ENCODE measurements at regions of chr1 and their contacts with region 1.

Region 1: DNA sequence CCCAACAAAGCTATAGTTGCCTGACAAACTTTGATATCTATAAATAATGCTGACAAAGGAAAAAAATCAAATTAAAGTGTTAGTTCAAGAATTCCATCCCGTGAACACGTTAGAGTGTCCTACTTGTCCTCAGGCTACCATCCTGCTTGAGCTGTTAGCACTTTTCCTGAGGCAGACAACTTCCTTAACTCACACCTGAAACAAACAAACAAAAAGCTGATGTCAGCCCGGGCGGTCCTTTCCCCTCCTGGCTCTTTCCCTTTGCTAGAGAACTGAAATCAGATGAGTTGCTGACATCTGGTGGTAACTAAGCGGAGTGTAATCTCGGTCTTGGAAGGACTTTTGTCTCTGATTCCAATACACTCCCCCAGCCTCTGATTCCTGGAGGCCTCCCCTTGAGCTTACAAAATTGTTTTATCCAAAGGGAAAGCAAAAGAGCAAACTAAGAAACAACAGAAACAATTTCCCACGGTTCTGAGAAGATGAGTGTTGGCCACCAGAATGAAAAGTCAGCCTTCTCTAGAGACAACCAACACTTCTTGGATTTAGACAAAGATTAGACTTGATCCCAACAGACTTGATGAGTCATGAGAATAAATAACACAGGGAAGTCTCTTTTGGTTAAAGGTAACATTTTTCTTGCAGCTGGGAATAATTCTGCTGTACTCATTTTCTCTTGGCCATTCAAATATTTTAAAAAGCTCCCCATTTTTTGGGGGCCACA is 135.4 kb downstream of the PROX1 start:
- DNase-seq: no peak
- H3K4me3 ChIP-seq: no peak overlapping the region
- H3K27ac ChIP-seq: no peak overlapping the region
- H3K4me1 ChIP-seq: no peaks in the 10 kb centered on the region
- H3K27me3 ChIP-seq: peaks cover 0 to 3% (median 0%) of the 10 kb centered on the region in 4 donors
- CTCF ChIP-seq: peak; percentile 38 to 51 (median 43)
- EP300 ChIP-seq: no peak
- POLR2A ChIP-seq: no peak

Region 2: GRCh38 chr1:213374369-213374768 is 748.9 kb before region 1 on chr1:
- intact Hi-C with region 1: loop called (anchors 5 kb)
- DNase-seq: no peak
- H3K4me3 ChIP-seq: no peak overlapping the region
- H3K27ac ChIP-seq: no peak overlapping the region
- H3K4me1 ChIP-seq: no peaks in the 10 kb centered on the region
- H3K27me3 ChIP-seq: no peaks in the 10 kb centered on the region
- CTCF ChIP-seq: peak; percentile 57 to 82 (median 67)
- EP300 ChIP-seq: no peak
- POLR2A ChIP-seq: no peak

Region 3: DNA sequence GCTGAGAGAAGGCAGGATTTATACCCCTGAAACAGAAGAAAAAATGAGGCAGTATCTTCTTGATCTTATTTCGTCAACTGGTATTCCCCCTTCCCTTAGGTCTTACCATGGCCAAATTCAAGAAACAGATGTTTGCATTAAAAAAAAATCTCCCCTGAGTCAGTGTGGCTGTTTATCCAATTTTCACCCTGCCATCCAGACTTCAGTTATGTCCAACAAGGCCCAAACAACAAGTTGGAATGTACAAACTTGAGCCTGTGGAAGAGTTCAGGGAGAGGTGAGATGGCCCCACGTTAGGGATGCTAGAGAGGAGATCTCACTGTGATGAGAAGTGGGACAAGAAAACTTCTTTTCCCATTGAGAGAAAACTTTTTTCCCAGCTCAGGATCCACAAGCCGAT is 282.6 kb before region 1 on chr1:
- intact Hi-C with region 1: no loop called
- DNase-seq: peak; percentile 55
- H3K4me3 ChIP-seq: no peak overlapping the region
- H3K27ac ChIP-seq: no peak overlapping the region
- H3K4me1 ChIP-seq: no peaks in the 10 kb centered on the region
- H3K27me3 ChIP-seq: no peaks in the 10 kb centered on the region
- CTCF ChIP-seq: no peak
- EP300 ChIP-seq: no peak
- POLR2A ChIP-seq: no peak

Region 4: DNA sequence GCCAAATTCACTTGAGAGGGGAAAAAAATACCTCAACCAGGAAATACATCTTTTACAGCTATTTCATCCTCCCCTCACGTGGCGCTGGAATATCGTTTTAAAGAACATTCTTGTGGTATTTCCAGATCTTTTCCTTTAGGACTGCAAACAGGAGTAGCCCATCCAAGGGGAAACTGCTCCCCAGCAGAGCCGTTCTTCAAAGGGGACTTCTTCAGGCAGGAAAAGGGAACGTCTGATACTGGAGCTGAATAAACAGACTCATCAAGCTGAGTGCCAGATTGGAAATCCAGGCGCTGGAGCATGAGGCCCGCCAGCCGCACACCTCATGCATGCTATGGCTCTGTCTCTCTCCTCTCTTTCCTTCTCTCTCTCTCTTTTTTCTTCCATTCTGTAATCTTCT is 169.4 kb before region 1 on chr1:
- intact Hi-C with region 1: loop called (anchors 10 kb)
- DNase-seq: no peak
- H3K4me3 ChIP-seq: no peak overlapping the region
- H3K27ac ChIP-seq: no peak overlapping the region
- H3K4me1 ChIP-seq: no peaks in the 10 kb centered on the region
- H3K27me3 ChIP-seq: no peaks in the 10 kb centered on the region
- CTCF ChIP-seq: no peak
- EP300 ChIP-seq: no peak
- POLR2A ChIP-seq: no peak

Region 5: GRCh38 chr1:213979751-213980586 is 143.3 kb before region 1 on chr1:
- intact Hi-C with region 1: no loop called
- DNase-seq: no peak
- H3K4me3 ChIP-seq: no peak overlapping the region
- H3K27ac ChIP-seq: no peak overlapping the region
- H3K4me1 ChIP-seq: peaks cover 11 to 28% (median 22%) of the 10 kb centered on the region in 4 donors
- H3K27me3 ChIP-seq: peaks cover 0 to 77% (median 52%) of the 10 kb centered on the region in 4 donors
- CTCF ChIP-seq: no peak
- EP300 ChIP-seq: no peak
- POLR2A ChIP-seq: no peak

Region 6: GRCh38 chr1:214292322-214292721 is 169.1 kb after region 1 on chr1:
- intact Hi-C with region 1: no loop called
- DNase-seq: no peak
- H3K4me3 ChIP-seq: no peak overlapping the region
- H3K27ac ChIP-seq: no peak overlapping the region
- H3K4me1 ChIP-seq: peaks cover 0 to 34% (median 0%) of the 10 kb centered on the region in 4 donors
- H3K27me3 ChIP-seq: no peaks in the 10 kb centered on the region
- CTCF ChIP-seq: no peak
- EP300 ChIP-seq: no peak
- POLR2A ChIP-seq: no peak